Right ventricle myocardium superior (tissue), 1 donor: ENCODE measurements at regions of chr5 and their contacts with region 1.

Region 1: GRCh38 chr5:64147849-64148441 is 17.7 kb upstream of the RNF180 start:
- DNase-seq: peak; percentile 71
- ATAC-seq: peak; percentile 79

Region 2: DNA sequence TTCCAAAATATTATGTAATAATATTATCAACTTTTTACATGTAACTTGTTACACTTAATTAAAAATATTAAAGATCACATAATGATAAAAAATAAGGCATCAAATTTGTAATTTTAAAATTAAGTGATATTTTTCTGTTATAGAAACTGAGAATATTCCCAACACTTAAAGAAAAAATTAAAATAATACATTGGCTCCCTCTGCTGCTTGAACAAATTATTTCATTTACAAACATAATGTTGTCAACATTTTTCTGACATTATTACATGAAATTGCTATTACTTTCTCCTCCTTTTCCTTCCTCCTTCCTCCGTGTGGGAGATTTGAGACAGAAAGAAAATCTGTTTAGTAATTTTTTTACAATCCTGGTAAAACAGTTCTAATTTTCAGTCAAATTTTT is 60.0 kb after region 1 on chr5:
- intact Hi-C with region 1: loop called (anchors 5 kb)
- DNase-seq: no peak
- ATAC-seq: no peak

Region 3: GRCh38 chr5:64612344-64612961 is 464.5 kb after region 1 on chr5:
- intact Hi-C with region 1: loop called (anchors 2 kb)
- DNase-seq: no peak
- ATAC-seq: peak; percentile 80